ENCODE measurements at regions of chr19 and their contacts with region 1.

Region 1: GRCh38 chr19:40221858-40222837 is 4.0 kb upstream of the TTC9B start:
- DNase-seq: peak; percentile 95
- H3K4me3 ChIP-seq: no peak overlapping the region
- H3K27ac ChIP-seq: no peak overlapping the region
- H3K4me1 ChIP-seq: no peaks in the 10 kb centered on the region; a peak in 2 of 4 replicates
- H3K27me3 ChIP-seq: no peaks in the 10 kb centered on the region
- CTCF ChIP-seq: peak; percentile 86
- EP300 ChIP-seq: peak in 1 of 2 experiments; percentile 13; a peak in 1 of 4 replicates
- RAD21 ChIP-seq: peak; percentile 82

Region 2: DNA sequence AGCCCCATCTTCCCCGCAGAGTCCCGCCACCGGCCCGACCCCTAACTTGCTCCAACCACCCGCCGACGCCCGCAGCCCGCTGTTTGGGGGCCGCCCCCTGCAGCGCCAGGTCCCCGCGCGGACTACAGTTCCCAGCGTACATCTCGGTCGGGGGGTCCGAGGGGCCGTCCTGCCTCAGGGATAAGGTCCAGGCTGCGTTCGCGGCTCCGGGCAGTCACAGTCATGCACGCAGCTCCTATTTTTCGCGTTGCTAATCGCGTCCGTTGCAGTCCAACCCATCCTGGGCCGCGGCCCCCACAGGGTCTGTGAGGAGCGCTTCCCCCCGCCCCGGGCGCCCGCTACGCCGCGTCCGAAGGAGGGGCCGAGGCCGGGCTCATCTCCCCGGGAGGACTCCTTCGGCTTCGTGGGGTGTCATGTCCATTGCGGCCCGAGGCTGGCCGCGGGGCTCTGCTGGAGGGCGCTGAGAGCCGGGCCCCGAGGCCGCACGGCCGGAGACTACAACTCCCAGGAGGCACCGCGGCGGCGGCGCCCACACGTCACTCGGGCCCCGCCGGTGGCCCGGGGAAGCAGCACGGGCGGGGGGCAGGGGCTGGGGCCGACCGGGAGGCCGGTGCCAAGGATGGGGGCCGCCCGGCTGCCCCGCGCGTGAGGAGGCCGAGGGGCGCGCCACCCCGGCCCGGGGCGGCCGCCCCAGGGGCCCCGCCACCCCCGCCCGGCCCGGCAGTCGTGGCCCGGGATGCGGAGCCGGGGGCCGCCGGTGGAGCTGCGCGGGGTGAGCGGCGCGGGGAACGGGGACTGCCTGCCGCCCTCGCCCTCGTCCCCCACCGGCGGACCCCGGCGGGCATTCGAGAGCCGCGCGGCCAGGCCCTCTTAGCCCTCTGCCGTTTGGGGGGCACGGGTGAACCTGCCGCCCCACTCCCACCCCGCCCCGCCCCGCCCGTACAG is 31.0 kb before region 1 on chr19 and contains the start of gene MAP3K10:
- CTCF ChIA-PET with region 1: interaction called, 35 read pairs
- POLR2A ChIA-PET with region 1: interaction called, 6 read pairs
- DNase-seq: peak; percentile 95
- H3K4me3 ChIP-seq: peak within 1 kb of the TSS; percentile 81 to 97
- H3K27ac ChIP-seq: peak within 1 kb of the TSS; percentile 87 to 88
- H3K4me1 ChIP-seq: peaks cover 5 to 11% of the 10 kb centered on the region in 2 experiments; a peak in 2 of 4 replicates
- H3K27me3 ChIP-seq: no peaks in the 10 kb centered on the region
- CTCF ChIP-seq: no peak
- EP300 ChIP-seq: no peak
- RAD21 ChIP-seq: no peak
- polyA plus RNA-seq, gene MAP3K10: 10.7 and 11.9 TPM in 2 replicates

Region 3: GRCh38 chr19:40200341-40201099 is 21.6 kb before region 1 on chr19:
- CTCF ChIA-PET with region 1: interaction called, 35 read pairs
- POLR2A ChIA-PET with region 1: no interaction called
- DNase-seq: no peak
- H3K4me3 ChIP-seq: no peak overlapping the region
- H3K27ac ChIP-seq: no peak overlapping the region
- H3K4me1 ChIP-seq: no peaks in the 10 kb centered on the region
- H3K27me3 ChIP-seq: no peaks in the 10 kb centered on the region
- CTCF ChIP-seq: no peak
- EP300 ChIP-seq: no peak
- RAD21 ChIP-seq: no peak

Region 4: DNA sequence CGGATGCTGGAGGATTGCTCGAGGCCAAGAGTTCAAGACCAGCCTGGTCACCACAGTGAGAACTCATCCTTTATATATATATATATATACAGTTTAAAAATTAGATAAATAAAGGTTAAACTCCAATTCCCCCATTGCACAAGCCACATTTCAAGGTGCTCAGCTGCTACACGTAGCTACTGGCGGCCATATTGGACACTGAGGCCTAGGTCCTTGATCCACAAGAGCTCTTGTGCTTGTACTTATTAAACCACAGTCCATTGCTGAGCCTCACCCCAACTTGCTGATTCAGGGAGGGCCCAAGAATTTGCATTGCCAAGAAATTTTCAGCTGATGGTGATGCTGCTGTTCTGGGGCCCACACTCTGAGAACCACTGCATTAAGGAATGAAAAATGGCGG is 13.5 kb before region 1 on chr19:
- CTCF ChIA-PET with region 1: interaction called, 26 read pairs
- POLR2A ChIA-PET with region 1: no interaction called
- DNase-seq: no peak
- H3K4me3 ChIP-seq: no peak overlapping the region
- H3K27ac ChIP-seq: no peak overlapping the region
- H3K4me1 ChIP-seq: no peaks in the 10 kb centered on the region
- H3K27me3 ChIP-seq: no peaks in the 10 kb centered on the region
- CTCF ChIP-seq: no peak
- EP300 ChIP-seq: no peak
- RAD21 ChIP-seq: no peak

Measured in SK-N-SH (cell line).